ENCODE measurements at regions of chr2 and their contacts with region 1.

Region 1: GRCh38 chr2:210195101-210195852 is 24.1 kb upstream of the KANSL1L start:
- DNase-seq: peak; percentile 67
- H3K4me3 ChIP-seq: peak overlapping the region; percentile 36
- H3K27ac ChIP-seq: no peak overlapping the region
- H3K4me1 ChIP-seq: peaks cover 24% of the 10 kb centered on the region
- H3K27me3 ChIP-seq: no peaks in the 10 kb centered on the region
- CTCF ChIP-seq: peak; percentile 79

Region 2: DNA sequence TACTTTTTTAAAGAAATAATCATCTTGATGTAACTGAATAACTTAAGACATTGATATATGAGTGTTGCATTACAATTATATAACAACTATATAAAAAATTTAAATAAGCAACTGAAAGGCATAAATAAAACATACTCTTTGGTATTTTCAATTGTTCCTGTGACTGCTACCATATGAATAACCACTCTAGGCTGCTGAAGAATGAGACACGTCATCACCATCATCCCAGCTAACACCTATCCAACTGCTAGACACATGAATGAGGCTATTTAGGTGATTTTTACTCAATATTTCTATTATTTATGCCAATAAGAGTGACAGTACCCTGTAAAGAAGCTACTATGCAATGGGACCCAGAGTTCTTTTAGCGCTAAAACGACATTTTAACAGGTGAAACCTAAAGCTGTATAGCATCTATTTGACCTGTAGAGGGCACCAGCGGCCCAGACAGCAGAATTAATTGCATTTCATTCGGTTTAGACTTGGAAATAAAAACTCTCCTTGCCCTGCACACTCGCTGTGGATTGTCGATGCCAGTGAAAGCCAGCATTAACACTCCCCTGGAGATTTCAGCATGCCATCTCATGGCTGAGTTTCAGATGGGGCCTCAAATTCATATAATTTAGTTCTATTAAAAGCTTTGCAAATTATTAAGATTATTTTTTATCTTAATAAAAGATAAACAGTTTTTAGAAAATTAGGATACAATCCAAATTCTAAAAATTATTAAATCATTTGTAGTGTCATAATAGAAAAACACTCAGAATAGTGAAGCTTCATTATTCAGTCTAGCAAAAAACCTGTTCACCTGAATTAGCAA is 860.9 kb before region 1 on chr2:
- CTCF ChIA-PET with region 1: no interaction called
- POLR2A ChIA-PET with region 1: no interaction called
- intact Hi-C with region 1: loop called (anchors 5 kb)
- DNase-seq: peak; percentile 80
- H3K4me3 ChIP-seq: no peak overlapping the region
- H3K27ac ChIP-seq: no peak overlapping the region
- H3K4me1 ChIP-seq: no peaks in the 10 kb centered on the region
- H3K27me3 ChIP-seq: peaks cover 21% of the 10 kb centered on the region
- CTCF ChIP-seq: peak; percentile 88

Region 3: GRCh38 chr2:209577376-209578357 is 617.6 kb before region 1 on chr2:
- CTCF ChIA-PET with region 1: no interaction called
- POLR2A ChIA-PET with region 1: no interaction called
- intact Hi-C with region 1: loop called (anchors 10 kb)
- DNase-seq: peak; percentile 34
- H3K4me3 ChIP-seq: no peak overlapping the region
- H3K27ac ChIP-seq: no peak overlapping the region
- H3K4me1 ChIP-seq: no peaks in the 10 kb centered on the region
- H3K27me3 ChIP-seq: no peaks in the 10 kb centered on the region
- CTCF ChIP-seq: peak; percentile 67

Region 4: GRCh38 chr2:209936106-209936666 is 259.1 kb before region 1 on chr2:
- CTCF ChIA-PET with region 1: interaction called, 3 read pairs
- POLR2A ChIA-PET with region 1: no interaction called
- intact Hi-C with region 1: loop called (anchors 2 kb)
- DNase-seq: peak; percentile 40
- H3K4me3 ChIP-seq: no peak overlapping the region
- H3K27ac ChIP-seq: no peak overlapping the region
- H3K4me1 ChIP-seq: peaks cover 15% of the 10 kb centered on the region
- H3K27me3 ChIP-seq: no peaks in the 10 kb centered on the region
- CTCF ChIP-seq: peak; percentile 57

Region 5: DNA sequence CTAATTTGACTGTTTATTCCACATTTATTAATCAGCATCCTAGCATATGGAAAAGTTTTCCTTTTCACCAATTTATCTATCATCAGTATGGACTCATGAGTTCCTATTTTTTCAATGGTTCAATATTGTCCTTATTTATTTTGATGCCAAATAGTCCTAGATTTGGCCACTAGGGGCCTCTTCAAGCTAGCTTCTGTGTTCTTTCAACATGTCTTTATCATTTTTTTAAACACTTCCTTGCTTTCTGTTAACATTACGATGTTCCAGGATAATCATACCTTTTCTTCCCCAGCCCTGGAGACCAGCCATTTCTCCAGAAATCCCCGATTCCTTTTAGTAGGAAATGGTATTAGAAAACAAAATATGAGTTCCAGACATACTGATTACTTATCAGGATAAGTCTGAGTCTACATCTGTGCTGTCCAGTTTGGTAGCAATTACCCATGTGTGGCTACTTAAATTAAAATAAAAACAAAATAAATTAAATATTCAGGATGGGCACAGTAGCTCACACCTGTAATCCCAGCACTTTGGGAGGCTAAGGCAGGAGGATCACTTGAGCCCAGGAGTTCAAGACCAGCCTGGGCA is 122.3 kb before region 1 on chr2:
- CTCF ChIA-PET with region 1: no interaction called
- POLR2A ChIA-PET with region 1: no interaction called
- intact Hi-C with region 1: loop called (anchors 1 kb)
- DNase-seq: peak; percentile 54
- H3K4me3 ChIP-seq: no peak overlapping the region
- H3K27ac ChIP-seq: no peak overlapping the region
- H3K4me1 ChIP-seq: no peaks in the 10 kb centered on the region
- H3K27me3 ChIP-seq: no peaks in the 10 kb centered on the region
- CTCF ChIP-seq: peak; percentile 79

Measured in A673 (cell line).